CD4-positive, alpha-beta memory T cell (primary cell): ENCODE measurements at regions of chr5 and their contacts with region 1.

Region 1: DNA sequence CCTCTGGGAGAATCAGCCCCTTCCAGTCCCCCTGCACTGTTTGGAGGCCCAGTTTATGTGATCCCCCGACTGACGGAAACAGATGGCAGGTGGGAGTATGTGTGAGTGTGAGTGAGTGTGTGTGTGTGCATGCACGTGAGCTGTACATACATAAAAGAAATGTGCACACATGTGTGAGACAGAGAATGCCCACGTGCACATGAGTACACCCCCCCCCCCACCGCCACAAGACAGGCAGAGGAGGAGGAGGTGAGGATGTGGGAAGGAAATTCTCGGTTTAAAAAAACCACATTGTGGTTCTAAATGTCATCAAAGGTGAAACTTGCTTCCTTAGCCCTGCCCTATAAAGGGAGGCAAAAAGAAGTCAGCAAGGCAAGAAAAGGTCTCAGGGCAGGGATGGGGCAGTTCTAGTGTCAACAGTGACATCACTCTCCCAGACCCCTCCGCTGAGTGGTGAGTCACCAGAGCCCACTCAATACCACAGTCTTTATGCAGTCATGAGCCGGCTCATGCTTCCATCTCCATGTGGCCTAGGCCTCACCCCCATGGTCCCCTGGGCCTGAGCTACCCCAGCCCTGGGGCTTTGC is 79.2 kb upstream of the HSPA9 start:
- DNase-seq: peak; percentile 80 to 87 (median 81)
- H3K4me3 ChIP-seq: no peak overlapping the region
- H3K4me3 Mint-ChIP-seq: peak overlapping the region in 6 of 8 donors; percentile 9 to 78 (median 52)
- H3K27ac ChIP-seq: no peak overlapping the region
- H3K27ac Mint-ChIP-seq: peak overlapping the region; percentile 19 to 93 (median 48)
- H3K4me1 ChIP-seq: peaks cover 26% of the 10 kb centered on the region
- H3K4me1 Mint-ChIP-seq: peaks cover 17 to 35% (median 24%) of the 10 kb centered on the region in 4 donors
- H3K27me3 ChIP-seq: peaks cover 79% of the 10 kb centered on the region
- H3K27me3 Mint-ChIP-seq: peaks cover 63 to 75% of the 10 kb centered on the region in 2 donors

Region 2: DNA sequence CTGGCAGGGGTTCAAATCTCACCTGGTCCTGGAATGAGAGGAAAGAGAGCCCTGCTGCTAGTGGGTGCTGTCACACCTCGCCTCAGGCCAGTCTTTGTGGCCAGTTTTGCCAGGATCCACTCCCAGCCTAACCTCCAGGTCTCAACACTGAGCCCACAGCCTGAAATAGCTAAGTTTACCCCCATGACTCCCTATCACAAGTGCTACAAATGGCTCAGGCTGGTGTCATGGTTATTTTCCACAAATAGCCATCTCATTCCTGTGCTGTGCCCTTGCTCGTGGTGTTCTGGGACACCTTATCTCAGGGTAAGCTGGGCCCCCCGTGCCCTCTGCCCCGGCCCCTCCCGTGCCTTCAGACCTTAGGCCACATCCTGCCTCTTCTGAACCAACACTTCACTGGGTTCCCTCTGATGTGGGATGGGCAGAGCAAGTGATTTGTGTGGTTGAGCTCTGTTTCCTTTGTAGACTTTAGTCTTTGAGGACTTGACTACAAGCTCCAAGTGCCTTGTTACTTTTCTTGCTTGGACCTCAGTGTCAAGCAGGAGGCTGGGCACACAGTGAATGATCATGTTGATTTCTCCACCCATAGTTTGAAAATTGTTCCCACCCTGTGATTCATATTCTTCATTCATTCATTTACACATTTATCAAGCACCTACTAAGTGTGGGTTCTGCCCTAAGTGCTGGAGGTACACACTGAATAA is 14.2 kb after region 1 on chr5:
- CTCF ChIA-PET with region 1: interaction called, 3 read pairs
- POLR2A ChIA-PET with region 1: interaction called, 5 read pairs
- intact Hi-C with region 1: loop called (anchors 1 kb)
- DNase-seq: peak; percentile 57 to 72 (median 67)
- H3K4me3 ChIP-seq: no peak overlapping the region
- H3K4me3 Mint-ChIP-seq: peak overlapping the region in 5 of 8 donors; percentile 19 to 60 (median 55)
- H3K27ac ChIP-seq: no peak overlapping the region
- H3K27ac Mint-ChIP-seq: peak overlapping the region in 1 of 7 donors; percentile 35
- H3K4me1 ChIP-seq: peaks cover 24% of the 10 kb centered on the region
- H3K4me1 Mint-ChIP-seq: peaks cover 19 to 43% (median 22%) of the 10 kb centered on the region in 4 donors
- H3K27me3 ChIP-seq: peaks cover 40% of the 10 kb centered on the region
- H3K27me3 Mint-ChIP-seq: peaks cover 59 to 69% of the 10 kb centered on the region in 2 donors

Region 3: DNA sequence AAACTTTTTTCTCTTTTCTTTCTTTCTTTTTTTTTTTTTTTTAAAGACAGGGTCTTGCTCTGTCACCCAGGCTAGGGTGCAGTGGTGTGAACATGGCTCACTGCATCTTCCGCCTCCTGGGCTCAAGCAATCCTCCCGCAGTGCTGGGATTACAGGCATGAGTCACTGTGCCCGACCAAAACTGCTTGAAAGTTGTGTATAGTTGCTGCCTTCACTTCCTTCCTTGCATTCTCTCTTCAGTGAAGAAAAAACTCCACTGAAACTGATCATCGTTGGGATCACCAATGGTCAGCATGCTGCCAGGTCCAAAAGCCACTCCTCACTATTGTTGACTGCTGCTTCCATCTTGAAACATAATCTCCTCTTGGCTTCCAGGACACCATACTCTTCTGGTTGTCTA is 32.3 kb after region 1 on chr5:
- CTCF ChIA-PET with region 1: no interaction called
- POLR2A ChIA-PET with region 1: no interaction called
- intact Hi-C with region 1: no loop called
- DNase-seq: no peak
- H3K4me3 ChIP-seq: no peak overlapping the region
- H3K4me3 Mint-ChIP-seq: no peak overlapping the region
- H3K27ac ChIP-seq: no peak overlapping the region
- H3K27ac Mint-ChIP-seq: no peak overlapping the region
- H3K4me1 ChIP-seq: no peaks in the 10 kb centered on the region
- H3K4me1 Mint-ChIP-seq: peaks cover 0 to 1% (median under 1%) of the 10 kb centered on the region in 4 donors
- H3K27me3 ChIP-seq: no peaks in the 10 kb centered on the region
- H3K27me3 Mint-ChIP-seq: peaks cover 29 to 32% of the 10 kb centered on the region in 2 donors

Region 4: GRCh38 chr5:139197710-139198669 is 543.6 kb after region 1 on chr5 and contains the start of gene SIL1:
- CTCF ChIA-PET with region 1: no interaction called
- POLR2A ChIA-PET with region 1: no interaction called
- intact Hi-C with region 1: loop called (anchors 5 kb)
- DNase-seq: peak; percentile 90 to 93 (median 91)
- H3K4me3 ChIP-seq: peak within 1 kb of the TSS; percentile 59 to 69
- H3K4me3 Mint-ChIP-seq: peak within 1 kb of the TSS; percentile 87 to 95 (median 89)
- H3K27ac ChIP-seq: peak within 1 kb of the TSS; percentile 86
- H3K27ac Mint-ChIP-seq: peak within 1 kb of the TSS; percentile 84 to 98 (median 94)
- H3K4me1 ChIP-seq: peaks cover 13% of the 10 kb centered on the region
- H3K4me1 Mint-ChIP-seq: peaks cover 13 to 29% (median 19%) of the 10 kb centered on the region in 4 donors
- H3K27me3 ChIP-seq: no peaks in the 10 kb centered on the region
- H3K27me3 Mint-ChIP-seq: no peaks in the 10 kb centered on the region
- total RNA-seq, gene SIL1: 16.4 to 16.7 TPM